ENCODE measurements at regions of chr6 and their contacts with region 1.

Region 1: DNA sequence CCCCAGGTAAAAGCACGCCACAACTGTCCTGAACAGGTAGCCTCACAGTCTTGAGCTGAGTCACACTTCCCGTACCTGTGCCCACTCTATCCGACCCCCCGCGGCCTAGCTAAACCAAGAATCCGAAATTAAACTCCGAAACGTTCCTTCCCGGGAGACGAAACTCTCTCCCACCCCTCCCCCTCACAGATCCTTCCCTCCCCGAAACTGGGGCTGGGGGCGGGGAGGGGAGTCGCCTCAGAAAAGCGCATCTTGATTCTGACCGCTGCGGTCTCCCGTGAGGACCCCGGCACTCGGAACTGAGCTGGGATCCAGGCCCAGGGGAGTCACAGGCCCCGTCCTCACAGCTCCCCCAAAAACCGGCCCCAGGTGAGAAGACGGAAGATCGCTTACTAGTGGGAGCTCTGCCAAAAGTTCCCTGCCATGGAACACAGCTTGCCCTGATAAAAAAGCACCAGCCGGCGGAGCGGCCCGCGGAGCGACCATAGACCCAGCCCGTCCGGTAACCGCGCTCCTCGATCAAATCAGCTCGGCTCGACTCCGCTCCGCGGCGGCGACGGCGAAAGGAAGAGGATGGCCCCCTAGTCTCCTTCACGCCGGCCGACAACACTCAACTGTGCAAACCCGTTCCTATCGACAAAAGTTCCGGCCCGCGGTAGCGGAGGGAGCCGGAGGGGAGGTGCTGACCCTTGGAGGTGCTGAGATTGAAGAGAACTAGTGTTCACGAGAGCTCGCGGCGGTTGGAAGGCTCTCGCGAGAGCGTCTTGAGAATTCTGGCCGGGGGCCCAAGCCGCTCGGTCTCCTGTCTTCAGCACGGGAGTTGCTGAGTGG is at the start of gene CCNC:
- DNase-seq: peak; percentile 87 to 95
- ATAC-seq: peak; percentile 98 to 99
- H3K4me3 ChIP-seq: peak within 1 kb of the TSS; percentile 84 to 99 (median 93)
- H3K27ac ChIP-seq: peak within 1 kb of the TSS; percentile 83 to 91 (median 89)
- H3K4me1 ChIP-seq: peaks cover 19 to 31% of the 10 kb centered on the region in 2 donors
- H3K27me3 ChIP-seq: no peaks in the 10 kb centered on the region
- CTCF ChIP-seq: peak in 1 of 5 experiments; percentile 11
- POLR2A ChIP-seq: peak; percentile 74
- total RNA-seq, gene CCNC: 18.1 to 45.4 (median 25.8) TPM

Region 2: GRCh38 chr6:99254616-99255550 is 313.4 kb before region 1 on chr6:
- in situ Hi-C with region 1: no loop called
- intact Hi-C with region 1: no loop called
- DNase-seq: no peak
- ATAC-seq: no peak
- H3K4me3 ChIP-seq: no peak overlapping the region
- H3K27ac ChIP-seq: no peak overlapping the region
- H3K4me1 ChIP-seq: no peaks in the 10 kb centered on the region
- H3K27me3 ChIP-seq: no peaks in the 10 kb centered on the region
- CTCF ChIP-seq: no peak
- POLR2A ChIP-seq: no peak

Region 3: DNA sequence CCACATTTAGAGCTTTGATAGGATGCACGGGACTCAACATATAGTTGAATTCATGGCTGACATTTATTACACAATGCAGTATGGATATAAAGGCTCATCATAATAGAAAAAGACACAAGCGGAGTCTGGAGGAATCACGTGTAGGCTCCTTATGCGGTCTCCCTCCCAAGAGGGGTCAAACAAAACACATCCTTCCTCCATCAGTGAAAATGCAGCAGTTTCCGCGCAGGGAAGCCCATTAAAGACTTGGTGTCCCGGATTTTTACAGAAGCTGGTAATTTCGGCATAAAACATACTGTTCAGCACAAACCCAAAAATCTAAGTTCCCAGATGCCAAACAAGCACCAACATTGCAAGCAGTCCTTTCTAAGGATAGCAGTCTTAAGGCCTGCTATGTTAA is 54.2 kb before region 1 on chr6:
- in situ Hi-C with region 1: loop called in 2 of 4 experiments (anchors 10 kb)
- intact Hi-C with region 1: no loop called
- DNase-seq: no peak
- ATAC-seq: no peak
- H3K4me3 ChIP-seq: peak overlapping the region; percentile 61 to 87 (median 74)
- H3K27ac ChIP-seq: peak overlapping the region in 3 of 4 donors; percentile 86 to 95 (median 92)
- H3K4me1 ChIP-seq: peaks cover 15 to 27% of the 10 kb centered on the region in 2 donors
- H3K27me3 ChIP-seq: no peaks in the 10 kb centered on the region
- CTCF ChIP-seq: no peak
- POLR2A ChIP-seq: no peak

Region 4: GRCh38 chr6:99520855-99521632 is 47.3 kb before region 1 on chr6:
- in situ Hi-C with region 1: loop called in 2 of 4 experiments (anchors 10 kb)
- intact Hi-C with region 1: loop called (anchors 1 kb)
- DNase-seq: peak; percentile 76 to 80
- ATAC-seq: peak; percentile 91 to 94
- H3K4me3 ChIP-seq: peak overlapping the region; percentile 78 to 93 (median 90)
- H3K27ac ChIP-seq: peak overlapping the region; percentile 88 to 93 (median 90)
- H3K4me1 ChIP-seq: peaks cover 7 to 13% of the 10 kb centered on the region in 2 donors
- H3K27me3 ChIP-seq: no peaks in the 10 kb centered on the region
- CTCF ChIP-seq: peak; percentile 82 to 97 (median 91)
- POLR2A ChIP-seq: peak; percentile 87 to 88

Measured in gastrocnemius medialis (tissue), 4 donors.